MCF 10A (cell line): ENCODE measurements at regions of chr13 and their contacts with region 1.

Region 1: DNA sequence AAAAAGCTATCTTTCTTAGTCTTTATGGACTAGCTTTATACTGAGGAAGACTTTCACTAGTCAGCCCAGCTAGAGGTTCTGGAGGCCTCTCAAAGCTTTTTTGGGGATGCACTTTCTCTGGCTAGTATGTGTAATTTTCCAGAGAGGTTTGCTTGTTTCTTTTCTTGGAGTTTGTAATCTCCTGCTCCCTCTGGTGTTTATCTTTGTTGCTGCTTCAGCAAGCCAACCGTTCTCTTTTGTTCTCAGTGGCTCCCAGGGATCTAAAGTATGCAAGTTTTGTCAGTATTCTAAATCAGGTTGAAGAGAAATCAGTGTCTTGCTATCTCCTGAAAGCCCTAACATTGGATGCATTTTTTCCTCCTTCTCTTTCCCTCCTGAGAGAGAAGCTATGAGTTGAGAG is 121.1 kb upstream of the MYO16 start:
- DNase-seq: peak; percentile 29
- H3K4me3 Mint-ChIP-seq: no peak overlapping the region
- H3K27ac Mint-ChIP-seq: no peak overlapping the region
- H3K4me1 Mint-ChIP-seq: no peaks in the 10 kb centered on the region
- H3K27me3 Mint-ChIP-seq: peaks cover 48% of the 10 kb centered on the region
- CTCF ChIP-seq: peak; percentile 70

Region 2: DNA sequence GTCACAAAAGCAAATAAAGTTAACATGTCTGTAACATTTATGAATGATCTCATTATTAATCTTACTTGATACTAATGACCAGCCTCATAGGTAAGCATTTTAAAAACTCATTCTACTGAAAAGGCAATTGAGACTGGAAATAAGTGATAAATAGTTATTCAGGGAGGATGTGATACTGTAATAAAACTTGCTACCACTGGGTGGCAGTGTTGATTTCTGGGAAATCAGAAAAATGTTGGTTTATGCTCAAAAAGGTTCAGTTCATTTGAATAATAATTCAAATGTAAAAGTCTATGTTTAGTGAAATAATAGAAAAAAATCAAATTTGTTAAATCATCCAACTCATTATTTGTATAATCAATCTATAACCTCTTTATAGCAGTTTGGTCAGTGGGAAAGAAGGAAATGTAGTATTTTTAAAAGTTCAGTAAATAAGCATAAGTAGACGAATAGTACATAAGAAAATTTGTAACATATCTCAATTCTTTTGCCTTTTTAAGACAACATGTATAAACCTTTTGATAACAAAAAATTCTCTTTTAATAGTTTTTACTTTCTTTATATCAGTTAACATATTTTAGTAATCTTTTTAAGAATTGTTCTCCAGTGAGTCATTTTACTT is 280.5 kb before region 1 on chr13:
- CTCF ChIA-PET with region 1: interaction called, 11 read pairs
- POLR2A ChIA-PET with region 1: no interaction called
- intact Hi-C with region 1: loop called (anchors 5 kb)
- DNase-seq: peak; percentile 46
- H3K4me3 Mint-ChIP-seq: no peak overlapping the region
- H3K27ac Mint-ChIP-seq: no peak overlapping the region
- H3K4me1 Mint-ChIP-seq: peaks cover 12% of the 10 kb centered on the region
- H3K27me3 Mint-ChIP-seq: no peaks in the 10 kb centered on the region
- CTCF ChIP-seq: peak; percentile 56

Region 3: GRCh38 chr13:108342369-108343289 is 165.6 kb before region 1 on chr13:
- CTCF ChIA-PET with region 1: interaction called, 55 read pairs
- POLR2A ChIA-PET with region 1: no interaction called
- intact Hi-C with region 1: loop called (anchors 5 kb)
- DNase-seq: peak; percentile 52
- H3K4me3 Mint-ChIP-seq: no peak overlapping the region
- H3K27ac Mint-ChIP-seq: no peak overlapping the region
- H3K4me1 Mint-ChIP-seq: no peaks in the 10 kb centered on the region
- H3K27me3 Mint-ChIP-seq: peaks cover 90% of the 10 kb centered on the region
- CTCF ChIP-seq: peak; percentile 47

Region 4: DNA sequence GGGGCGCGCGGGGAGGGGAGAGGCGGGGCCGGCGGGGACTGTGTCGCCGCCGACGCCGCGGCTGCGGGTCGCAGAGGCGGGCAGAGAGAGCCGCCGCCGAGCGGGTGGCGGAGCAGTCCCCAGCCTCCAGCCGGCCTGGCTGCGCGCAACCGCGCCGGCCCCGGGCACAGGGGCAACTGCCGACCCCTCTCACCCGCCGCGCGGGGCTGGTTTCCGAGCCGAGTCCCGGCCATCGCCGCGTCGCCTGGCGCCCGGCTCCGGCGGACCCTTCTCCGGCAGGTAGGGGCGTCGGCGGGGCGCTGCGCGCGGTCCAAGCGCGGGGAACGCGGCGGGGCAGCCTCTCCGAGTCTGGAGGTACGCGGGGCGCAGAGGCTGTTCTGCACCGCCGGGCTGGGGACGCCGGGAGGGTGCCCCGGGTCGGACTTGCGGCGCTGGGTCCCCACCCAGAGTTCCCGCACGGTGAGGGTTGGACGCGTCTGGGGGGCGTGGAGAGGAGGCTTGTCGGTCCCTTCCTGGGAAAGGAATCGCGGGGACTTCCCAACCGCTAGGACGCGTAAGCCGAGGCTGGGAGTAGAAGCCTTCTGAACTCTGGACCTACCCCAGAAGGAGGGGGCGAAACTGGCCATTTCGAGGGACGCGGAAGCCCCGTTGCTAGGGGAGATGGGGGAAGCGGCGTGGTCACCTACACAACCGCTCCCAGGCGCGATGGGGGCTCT is 12.5 kb before region 1 on chr13:
- CTCF ChIA-PET with region 1: interaction called, 10 read pairs
- POLR2A ChIA-PET with region 1: interaction called, 3 read pairs
- intact Hi-C with region 1: no loop called
- DNase-seq: no peak
- H3K4me3 Mint-ChIP-seq: no peak overlapping the region
- H3K27ac Mint-ChIP-seq: no peak overlapping the region
- H3K4me1 Mint-ChIP-seq: peaks cover 6% of the 10 kb centered on the region
- H3K27me3 Mint-ChIP-seq: peaks cover 38% of the 10 kb centered on the region
- CTCF ChIP-seq: no peak

Region 5: GRCh38 chr13:108895220-108895704 is 387.0 kb after region 1 on chr13:
- CTCF ChIA-PET with region 1: interaction called, 10 read pairs
- POLR2A ChIA-PET with region 1: no interaction called
- intact Hi-C with region 1: loop called (anchors 5 kb)
- DNase-seq: peak; percentile 67
- H3K4me3 Mint-ChIP-seq: no peak overlapping the region
- H3K27ac Mint-ChIP-seq: no peak overlapping the region
- H3K4me1 Mint-ChIP-seq: no peaks in the 10 kb centered on the region
- H3K27me3 Mint-ChIP-seq: peaks cover 29% of the 10 kb centered on the region
- CTCF ChIP-seq: peak; percentile 60